ENCODE measurements at regions of chr7 and their contacts with region 1.

Region 1: DNA sequence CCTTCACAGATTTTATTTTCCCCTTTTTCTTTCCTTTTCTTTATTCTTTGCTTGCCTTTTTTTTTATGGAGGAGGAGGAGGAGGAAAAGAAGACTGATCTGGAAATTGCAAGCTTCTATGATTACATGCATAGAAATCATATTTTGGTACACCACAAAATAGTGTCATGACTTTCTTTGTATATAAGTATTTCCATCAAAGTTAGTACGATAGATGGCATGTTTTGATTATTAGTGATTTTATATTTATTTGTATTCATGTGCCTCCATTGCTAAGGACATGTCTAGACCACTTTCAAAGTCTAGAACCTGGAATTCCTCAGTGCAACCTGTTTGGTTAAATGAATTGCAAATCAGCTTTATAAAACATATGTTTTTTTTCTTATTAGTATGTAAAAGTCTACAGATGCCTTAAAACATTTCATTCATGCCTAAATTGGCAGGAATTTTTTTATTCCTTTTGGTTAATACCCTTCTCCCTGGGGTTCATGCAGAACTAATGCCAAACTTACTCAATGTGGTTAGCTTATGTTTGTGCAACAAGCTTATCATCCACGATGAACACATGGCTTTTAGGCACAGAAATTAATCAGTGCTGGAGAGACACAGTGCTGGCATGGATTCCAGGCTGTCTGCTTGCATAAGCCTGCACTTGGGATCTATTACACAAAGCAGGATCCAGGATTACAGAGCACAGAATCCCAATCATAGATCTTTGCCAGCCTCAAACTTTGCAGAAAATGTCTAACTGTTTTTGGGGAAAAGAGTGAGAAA is 213.1 kb downstream of the CHRM2 start:
- DNase-seq: peak; percentile 77

Region 2: DNA sequence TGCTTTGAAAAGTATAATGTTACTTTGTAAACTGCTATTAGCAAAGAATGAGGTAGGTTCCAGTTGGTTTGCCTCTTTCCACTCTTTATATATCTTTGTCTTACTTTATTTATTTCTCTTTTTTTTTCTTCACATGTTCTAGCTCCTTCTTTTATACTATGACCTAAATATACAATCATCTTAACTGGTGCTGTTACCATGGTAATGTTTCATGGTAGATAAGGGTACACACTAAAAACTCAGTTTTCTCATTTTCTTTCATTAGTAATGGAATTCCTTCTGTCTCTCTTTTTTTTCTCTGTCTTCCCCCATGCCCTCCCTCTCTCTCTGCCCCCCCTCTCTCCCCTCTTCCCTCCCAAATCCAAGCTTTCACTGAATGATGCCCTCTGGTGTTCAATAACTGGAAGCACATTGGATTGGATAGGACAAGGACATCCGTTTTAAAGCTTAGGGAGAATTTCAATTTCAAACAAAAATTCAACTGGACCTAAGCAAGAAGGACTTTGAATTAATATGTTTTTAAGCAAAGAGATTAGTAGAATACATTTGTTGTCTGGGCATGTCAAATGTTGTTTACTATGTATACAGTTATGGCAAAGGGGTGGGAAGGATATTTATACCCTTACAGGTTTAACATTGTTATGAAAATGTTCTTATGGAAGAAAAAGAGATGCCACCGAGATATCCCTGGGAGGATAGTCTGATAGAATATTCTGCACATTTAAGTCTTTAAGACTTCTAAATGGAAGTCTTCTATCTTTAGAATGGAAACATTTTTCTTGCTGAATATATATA is 207.1 kb before region 1 on chr7:
- intact Hi-C with region 1: loop called (anchors 5 kb)
- DNase-seq: no peak

Region 3: GRCh38 chr7:136947347-136947746 is 134.2 kb before region 1 on chr7:
- intact Hi-C with region 1: loop called (anchors 10 kb)
- DNase-seq: no peak

Region 4: DNA sequence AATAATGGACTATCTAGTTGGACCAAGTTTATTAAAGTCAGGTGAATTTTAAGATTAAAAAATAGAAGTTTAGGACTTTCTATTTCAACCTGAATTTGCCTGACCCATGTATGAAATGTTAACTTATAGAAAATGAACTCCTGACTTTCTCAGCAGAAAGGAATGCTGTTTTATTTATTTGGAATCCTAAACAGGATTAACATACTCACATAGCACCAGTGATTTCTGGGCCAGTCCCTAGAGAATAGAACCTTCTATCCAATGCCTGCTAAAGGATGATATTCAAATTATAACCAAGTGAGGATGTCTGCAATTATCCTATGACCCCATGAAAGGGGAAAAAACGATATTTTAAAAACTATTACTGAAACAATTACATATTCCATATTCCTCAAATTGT is 64.3 kb before region 1 on chr7:
- intact Hi-C with region 1: loop called (anchors 5 kb)
- DNase-seq: no peak

Region 5: GRCh38 chr7:137266764-137267163 is 185.3 kb after region 1 on chr7:
- intact Hi-C with region 1: no loop called
- DNase-seq: no peak

Measured in cardiac septum (tissue), 1 donor.